ENCODE measurements at regions of chr10 and their contacts with region 1.

Region 1: DNA sequence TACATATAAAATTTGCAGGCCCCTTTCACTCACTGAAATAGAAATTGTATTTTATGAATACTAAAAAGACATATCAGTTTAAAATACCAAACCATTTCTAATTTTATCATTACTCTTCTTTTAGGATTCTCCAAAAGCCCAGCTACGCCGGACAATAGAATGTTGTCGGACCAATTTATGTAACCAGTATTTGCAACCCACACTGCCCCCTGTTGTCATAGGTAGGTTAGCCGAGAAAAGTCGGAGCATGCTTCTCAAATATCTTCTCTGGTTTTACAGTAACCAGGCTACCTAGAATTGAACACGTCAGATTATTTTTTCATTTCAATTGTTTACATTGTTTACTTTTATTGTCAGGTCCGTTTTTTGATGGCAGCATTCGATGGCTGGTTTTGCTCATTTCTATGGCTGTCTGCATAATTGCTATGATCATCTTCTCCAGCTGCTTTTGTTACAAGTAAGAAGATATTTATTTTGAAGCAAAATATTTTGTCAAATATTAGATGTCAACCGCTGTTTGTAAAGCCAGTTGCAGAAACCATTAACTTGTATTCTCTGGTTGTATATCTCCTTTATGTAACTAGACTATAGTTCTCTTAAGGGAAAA is 57.6 kb downstream of the MMRN2 start:
- DNase-seq: peak in 1 of 2 donors; percentile 81
- ATAC-seq: peak in 7 of 8 donors; percentile 29 to 84 (median 64)
- H3K4me3 ChIP-seq: no peak overlapping the region
- H3K27ac ChIP-seq: peak overlapping the region in 6 of 10 donors; percentile 5 to 83 (median 63)
- H3K4me1 ChIP-seq: peaks cover 0 to 41% (median 17%) of the 10 kb centered on the region in 9 donors
- H3K27me3 ChIP-seq: peaks cover 0 to 11% (median 0%) of the 10 kb centered on the region in 7 donors
- CTCF ChIP-seq: peak; percentile 61 to 89 (median 78)

Region 2: GRCh38 chr10:86688398-86688921 is 211.3 kb before region 1 on chr10:
- intact Hi-C with region 1: loop called in 7 of 10 experiments (anchors 2 to 5 kb)
- DNase-seq: peak in 1 of 2 donors; percentile 62
- ATAC-seq: peak in 2 of 8 donors; percentile 11 to 14
- H3K4me3 ChIP-seq: no peak overlapping the region
- H3K27ac ChIP-seq: peak overlapping the region in 7 of 10 donors; percentile 28 to 100 (median 49)
- H3K4me1 ChIP-seq: peaks cover 13 to 100% (median 40%) of the 10 kb centered on the region in 9 donors
- H3K27me3 ChIP-seq: peaks cover 0 to 17% (median 6%) of the 10 kb centered on the region in 7 donors
- CTCF ChIP-seq: peak; percentile 54 to 87 (median 82)

Region 3: DNA sequence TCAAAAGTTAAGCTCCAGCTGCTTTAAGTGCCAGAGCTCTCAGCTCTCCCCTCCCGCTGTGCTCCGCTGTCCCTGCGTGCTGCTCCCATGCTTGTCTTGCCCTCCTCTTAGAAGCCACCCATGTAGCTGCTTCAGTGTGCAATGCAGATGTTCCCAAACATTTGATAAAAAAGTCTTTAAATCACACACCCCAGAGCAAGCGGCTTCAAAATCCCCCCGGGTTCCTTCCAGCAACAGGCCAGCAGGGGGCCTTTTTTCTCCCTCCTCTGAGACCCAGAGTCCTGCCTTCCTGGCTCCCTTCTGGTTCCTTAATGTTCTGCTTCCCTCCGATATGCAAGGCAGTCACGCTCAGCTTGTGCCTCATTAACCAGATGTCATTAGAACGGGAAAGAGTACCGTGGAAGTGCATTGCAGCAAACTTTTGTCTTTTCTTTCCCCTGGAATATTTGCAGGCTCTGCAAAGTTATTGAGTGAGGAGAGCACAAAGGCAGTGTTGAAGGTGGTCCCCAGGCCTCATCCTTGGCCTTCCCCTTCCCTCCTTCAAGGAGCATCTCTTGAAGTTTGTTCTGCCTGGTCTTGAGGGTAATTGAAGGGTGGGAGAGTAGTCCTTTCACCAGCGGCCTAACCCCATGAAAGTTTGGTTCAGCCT is 205.9 kb before region 1 on chr10:
- intact Hi-C with region 1: loop called in 7 of 10 experiments (anchors 2 to 5 kb)
- DNase-seq: peak in 1 of 2 donors; percentile 57
- ATAC-seq: no peak
- H3K4me3 ChIP-seq: no peak overlapping the region
- H3K27ac ChIP-seq: peak overlapping the region in 6 of 10 donors; percentile 8 to 71 (median 56)
- H3K4me1 ChIP-seq: peaks cover 6 to 92% (median 24%) of the 10 kb centered on the region in 9 donors
- H3K27me3 ChIP-seq: peaks cover 0 to 9% (median 0%) of the 10 kb centered on the region in 7 donors
- CTCF ChIP-seq: peak; percentile 21 to 68 (median 61)

Region 4: GRCh38 chr10:86710987-86711512 is 188.7 kb before region 1 on chr10:
- intact Hi-C with region 1: loop called in 9 of 10 experiments (anchors 5 to 10 kb)
- DNase-seq: peak; percentile 84 to 91
- ATAC-seq: peak; percentile 65 to 87 (median 76)
- H3K4me3 ChIP-seq: peak overlapping the region; percentile 22 to 84 (median 65)
- H3K27ac ChIP-seq: peak overlapping the region; percentile 79 to 97 (median 93)
- H3K4me1 ChIP-seq: peaks cover 15 to 76% (median 36%) of the 10 kb centered on the region in 9 donors
- H3K27me3 ChIP-seq: peaks cover 0 to 44% (median 14%) of the 10 kb centered on the region in 7 donors
- CTCF ChIP-seq: peak; percentile 66 to 94 (median 86)

Region 5: DNA sequence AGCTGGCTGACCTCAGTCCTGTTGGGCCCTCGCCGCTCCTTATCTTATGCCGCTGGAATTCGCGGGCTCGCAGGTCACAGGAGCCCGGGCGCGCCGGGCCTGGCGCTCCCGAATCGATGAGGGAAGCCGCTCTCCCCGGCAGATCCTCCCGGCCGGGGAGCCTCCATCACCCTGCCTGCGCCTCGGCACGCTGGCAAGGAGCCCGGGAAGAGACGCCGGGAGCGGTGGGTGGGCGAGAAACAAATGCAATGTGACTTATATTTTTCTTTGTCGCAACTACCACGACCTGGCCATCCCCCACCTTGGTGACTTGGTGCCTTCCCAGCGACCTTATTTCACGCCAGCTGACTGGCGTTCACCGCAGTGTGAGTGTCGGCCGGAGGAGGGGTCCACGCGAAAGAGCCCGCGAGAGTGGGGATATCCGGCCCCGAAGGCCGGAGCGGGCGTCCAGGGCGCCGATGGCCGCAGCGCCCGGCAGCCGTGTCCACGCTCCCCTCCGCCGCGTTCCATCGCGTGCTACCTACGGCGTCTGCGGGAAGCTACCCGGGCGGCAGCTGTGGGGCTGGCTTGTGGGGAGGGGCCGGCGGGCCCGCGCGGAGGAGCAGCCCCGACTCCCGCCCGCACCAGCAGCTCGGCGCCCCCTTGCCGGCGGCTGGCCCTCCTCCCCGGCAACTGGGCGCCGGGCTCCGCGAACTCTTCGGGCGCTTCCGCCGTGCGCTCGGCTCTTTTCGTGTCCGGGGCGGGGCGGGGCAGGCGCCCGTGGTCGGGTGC is 143.8 kb before region 1 on chr10:
- intact Hi-C with region 1: loop called in 4 of 10 experiments (anchors 5 kb)
- DNase-seq: peak; percentile 81 to 93
- ATAC-seq: peak; percentile 86 to 92 (median 89)
- H3K4me3 ChIP-seq: peak overlapping the region; percentile 33 to 90 (median 77)
- H3K27ac ChIP-seq: peak overlapping the region; percentile 89 to 99 (median 98)
- H3K4me1 ChIP-seq: peaks cover 0 to 60% (median 41%) of the 10 kb centered on the region in 9 donors
- H3K27me3 ChIP-seq: peaks cover 0 to 78% (median 59%) of the 10 kb centered on the region in 7 donors
- CTCF ChIP-seq: peak in 1 of 9 donors; percentile 24

Region 6: DNA sequence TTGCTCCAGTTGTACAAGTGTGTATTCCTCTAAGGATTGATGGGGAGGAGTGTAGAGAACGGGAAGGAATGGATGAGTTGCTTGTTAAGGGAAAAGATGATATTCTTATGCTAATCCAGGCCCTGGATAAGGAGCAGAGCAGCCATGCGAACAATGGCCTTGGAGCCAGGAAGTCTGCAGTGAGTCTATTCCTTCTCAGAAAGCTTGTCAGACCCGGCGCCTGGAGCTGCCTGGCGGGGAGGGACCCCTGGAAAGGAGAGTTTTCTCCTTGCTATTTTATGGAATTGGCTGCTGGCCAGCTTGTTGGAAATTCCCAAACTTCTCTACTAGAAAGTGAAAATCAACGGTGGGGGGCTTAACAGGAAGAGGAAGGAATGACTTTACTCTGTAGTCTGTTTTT is 31.4 kb before region 1 on chr10:
- intact Hi-C with region 1: no loop called
- DNase-seq: peak in 1 of 2 donors; percentile 65
- ATAC-seq: peak in 5 of 8 donors; percentile 35 to 57 (median 44)
- H3K4me3 ChIP-seq: no peak overlapping the region
- H3K27ac ChIP-seq: peak overlapping the region in 4 of 10 donors; percentile 6 to 46 (median 32)
- H3K4me1 ChIP-seq: peaks cover 0 to 64% (median 36%) of the 10 kb centered on the region in 9 donors
- H3K27me3 ChIP-seq: peaks cover 0 to 10% (median 0%) of the 10 kb centered on the region in 7 donors
- CTCF ChIP-seq: no peak

Region 7: DNA sequence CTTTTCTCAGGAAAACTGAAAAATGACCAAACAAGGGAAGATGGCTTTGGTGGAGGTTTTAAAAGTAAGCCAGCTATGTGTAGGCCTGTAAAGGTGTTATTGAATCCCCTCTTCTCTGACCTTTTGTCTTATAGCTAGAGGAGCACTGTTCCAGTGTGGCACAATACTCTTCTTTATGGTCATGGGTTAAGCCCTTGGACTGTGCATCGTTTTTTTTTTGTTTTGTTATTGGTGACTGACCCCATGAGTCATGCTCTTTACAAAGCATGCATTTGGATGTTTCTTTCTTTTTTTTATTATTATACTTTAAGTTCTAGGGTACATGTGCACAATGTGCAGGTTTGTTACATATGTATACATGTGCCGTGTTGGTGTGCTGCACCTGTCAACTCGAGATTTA is 100.7 kb after region 1 on chr10:
- intact Hi-C with region 1: no loop called
- DNase-seq: no peak
- ATAC-seq: no peak
- H3K4me3 ChIP-seq: no peak overlapping the region
- H3K27ac ChIP-seq: no peak overlapping the region
- H3K4me1 ChIP-seq: no peaks in the 10 kb centered on the region
- H3K27me3 ChIP-seq: no peaks in the 10 kb centered on the region
- CTCF ChIP-seq: no peak

Region 8: DNA sequence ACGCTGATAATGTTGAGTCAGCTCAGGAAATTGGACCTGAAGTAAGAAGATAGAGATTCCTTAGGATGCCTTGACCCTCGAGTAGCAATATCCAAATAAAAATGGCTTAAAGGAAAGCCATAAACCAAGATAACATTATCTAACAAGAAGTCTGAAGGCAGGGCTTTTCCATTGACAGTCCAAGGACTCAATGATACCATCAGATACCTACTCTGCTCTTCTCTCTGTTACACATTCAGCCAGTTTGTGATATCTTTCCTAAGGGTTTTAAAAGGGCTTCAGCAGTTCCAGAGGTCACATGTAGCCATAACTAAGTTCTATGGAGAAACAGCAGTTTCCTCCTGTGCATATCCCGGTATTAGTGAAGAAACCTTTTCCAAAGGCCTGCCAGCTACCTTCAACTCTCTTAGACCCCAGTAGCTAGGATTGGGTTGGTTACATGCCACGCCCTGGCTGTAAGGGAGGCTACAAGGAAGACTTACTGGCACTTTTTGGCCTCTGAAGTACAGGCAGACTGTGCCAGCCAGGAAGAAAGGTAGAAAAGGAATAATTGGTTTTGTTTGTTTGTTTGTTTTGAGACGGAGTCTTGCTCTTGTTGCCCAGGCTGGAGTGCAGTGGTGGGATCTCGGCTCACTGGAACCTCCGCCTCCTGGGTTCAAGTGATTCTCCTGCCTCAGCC is 205.8 kb after region 1 on chr10:
- intact Hi-C with region 1: no loop called
- DNase-seq: no peak
- ATAC-seq: no peak
- H3K4me3 ChIP-seq: no peak overlapping the region
- H3K27ac ChIP-seq: no peak overlapping the region
- H3K4me1 ChIP-seq: no peaks in the 10 kb centered on the region
- H3K27me3 ChIP-seq: no peaks in the 10 kb centered on the region
- CTCF ChIP-seq: no peak